ENCODE measurements at regions of chr5 and their contacts with region 1.

Region 1: DNA sequence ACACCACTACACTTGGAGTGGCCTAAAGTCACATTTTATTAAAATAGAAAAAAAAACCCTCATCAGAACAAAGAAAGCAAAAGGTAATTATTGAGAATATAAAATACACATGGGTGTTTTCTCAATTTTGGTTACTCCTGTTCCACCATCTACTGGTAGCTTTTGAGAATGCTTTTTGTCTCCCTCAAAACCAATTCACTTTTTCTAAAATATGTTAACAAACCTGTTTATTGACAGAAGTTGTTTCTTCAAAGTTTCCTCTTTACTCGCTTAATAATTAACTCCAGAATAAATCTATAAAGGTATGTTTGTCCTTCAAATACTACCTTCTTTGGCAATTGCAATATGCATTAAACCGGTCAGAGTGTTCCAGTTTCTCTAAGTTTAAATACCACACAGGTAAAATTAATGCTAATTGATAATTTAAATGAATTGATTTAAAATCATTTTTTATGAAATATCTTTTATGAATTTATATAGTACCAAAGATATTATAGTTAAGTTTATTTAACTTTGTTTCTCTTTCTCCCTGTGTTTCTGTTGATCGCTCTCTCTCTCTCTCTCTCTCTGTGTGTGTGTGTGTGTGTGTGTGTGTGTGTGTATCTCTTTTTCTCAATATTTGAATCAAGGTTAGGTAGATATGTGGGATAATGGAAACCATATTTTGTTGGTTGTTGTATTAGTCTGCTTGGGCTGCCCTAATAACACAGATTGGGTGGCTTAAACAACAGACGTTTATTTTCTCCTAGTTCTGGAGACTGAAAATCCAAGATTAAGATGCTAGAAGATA is 487.4 kb downstream of the PRDM9 start:
- DNase-seq: no peak
- H3K4me3 Mint-ChIP-seq: peak overlapping the region; percentile 45
- H3K27ac Mint-ChIP-seq: peak overlapping the region; percentile 32
- H3K4me1 Mint-ChIP-seq: peaks cover 16% of the 10 kb centered on the region
- H3K27me3 Mint-ChIP-seq: no peaks in the 10 kb centered on the region
- CTCF ChIP-seq: no peak

Region 2: GRCh38 chr5:23820765-23821471 is 173.9 kb before region 1 on chr5:
- CTCF ChIA-PET with region 1: interaction called, 3 read pairs
- intact Hi-C with region 1: loop called (anchors 1 kb)
- DNase-seq: peak; percentile 8
- H3K4me3 Mint-ChIP-seq: no peak overlapping the region
- H3K27ac Mint-ChIP-seq: no peak overlapping the region
- H3K4me1 Mint-ChIP-seq: peaks cover 8% of the 10 kb centered on the region
- H3K27me3 Mint-ChIP-seq: no peaks in the 10 kb centered on the region
- CTCF ChIP-seq: peak; percentile 25

Region 3: GRCh38 chr5:24145806-24146205 is 151.0 kb after region 1 on chr5:
- CTCF ChIA-PET with region 1: no interaction called
- intact Hi-C with region 1: no loop called
- DNase-seq: no peak
- H3K4me3 Mint-ChIP-seq: no peak overlapping the region
- H3K27ac Mint-ChIP-seq: no peak overlapping the region
- H3K4me1 Mint-ChIP-seq: no peaks in the 10 kb centered on the region
- H3K27me3 Mint-ChIP-seq: no peaks in the 10 kb centered on the region
- CTCF ChIP-seq: no peak

Region 4: DNA sequence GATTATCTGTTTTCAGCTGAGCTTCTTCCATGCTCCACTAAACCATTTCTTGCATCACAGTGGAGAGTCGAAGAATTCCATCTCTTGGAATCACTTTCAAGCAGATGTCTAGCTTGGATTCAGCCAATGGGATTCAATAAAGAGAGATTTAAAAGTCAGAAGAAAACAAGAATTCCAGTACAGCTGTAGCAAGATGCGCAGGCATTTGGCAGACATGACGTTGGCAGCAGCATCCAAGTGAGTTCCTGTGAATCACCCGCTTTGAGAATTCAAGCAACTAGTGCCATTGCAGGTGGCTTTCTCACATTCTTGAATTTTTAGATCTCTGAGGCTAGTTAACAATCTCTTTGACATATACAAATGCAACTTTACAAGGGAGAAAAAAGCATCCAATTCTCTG is 183.0 kb after region 1 on chr5:
- CTCF ChIA-PET with region 1: no interaction called
- intact Hi-C with region 1: no loop called
- DNase-seq: no peak
- H3K4me3 Mint-ChIP-seq: no peak overlapping the region
- H3K27ac Mint-ChIP-seq: no peak overlapping the region
- H3K4me1 Mint-ChIP-seq: no peaks in the 10 kb centered on the region
- H3K27me3 Mint-ChIP-seq: no peaks in the 10 kb centered on the region
- CTCF ChIP-seq: no peak

Measured in Calu3 (cell line).